ENCODE measurements at regions of chr11 and their contacts with region 1.

Region 1: DNA sequence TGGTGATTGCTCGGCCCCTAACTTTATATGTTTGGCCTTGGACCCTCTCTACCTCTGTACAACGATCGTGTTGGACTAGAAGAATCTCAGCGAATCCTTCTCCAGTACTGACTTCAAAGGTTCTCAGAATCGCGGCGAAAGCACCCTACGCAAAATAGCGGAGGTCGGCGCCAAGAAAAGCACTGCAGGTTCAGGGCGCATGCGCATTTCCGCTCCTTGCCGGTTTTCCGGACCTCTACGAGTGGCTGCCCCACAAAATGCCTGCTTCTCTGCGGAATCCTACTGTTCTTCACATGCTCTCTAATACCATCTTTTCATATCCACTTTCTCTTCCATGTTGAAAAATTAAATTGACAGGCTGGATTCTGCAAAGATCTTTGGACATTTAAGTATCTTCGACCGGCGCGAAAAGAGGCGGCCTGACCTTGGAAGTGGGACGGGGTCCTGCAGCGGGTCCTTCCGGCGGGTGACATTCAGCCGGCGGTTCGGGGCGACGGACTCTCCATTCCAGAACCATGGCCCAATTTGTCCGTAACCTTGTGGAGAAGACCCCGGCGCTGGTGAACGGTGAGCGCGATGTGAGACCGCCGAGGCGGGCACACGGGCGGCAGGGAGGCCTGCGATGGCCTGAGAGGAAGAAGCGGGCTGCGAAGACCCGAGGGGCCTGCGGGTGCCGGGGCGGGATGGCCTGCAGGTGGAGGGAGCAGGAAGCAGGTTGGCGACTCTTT is at the start of gene ATP5MG:
- DNase-seq: peak; percentile 93
- ATAC-seq: peak; percentile 78
- H3K4me3 ChIP-seq: peak within 1 kb of the TSS; percentile 89
- H3K27ac ChIP-seq: peak within 1 kb of the TSS; percentile 98
- H3K4me1 ChIP-seq: peaks cover 15% of the 10 kb centered on the region; the same call in 1 of the 2 replicates
- H3K27me3 ChIP-seq: no peaks in the 10 kb centered on the region
- CTCF ChIP-seq: no peak
- EP300 ChIP-seq: no peak
- POLR2A ChIP-seq: peak; percentile 84
- RAD21 ChIP-seq: no peak
- polyA plus RNA-seq, gene ATP5MG: 2,154 to 2,276 TPM

Region 2: GRCh38 chr11:118380571-118380970 is 20.7 kb before region 1 on chr11:
- CTCF ChIA-PET with region 1: interaction called, 10 read pairs
- POLR2A ChIA-PET with region 1: no interaction called
- RAD21 ChIA-PET with region 1: no interaction called
- SMC1A ChIA-PET with region 1: interaction called, 10 read pairs
- in situ Hi-C with region 1: no loop called
- intact Hi-C with region 1: no loop called
- DNase-seq: no peak
- ATAC-seq: no peak
- H3K4me3 ChIP-seq: no peak overlapping the region
- H3K27ac ChIP-seq: no peak overlapping the region
- H3K4me1 ChIP-seq: no peaks in the 10 kb centered on the region
- H3K27me3 ChIP-seq: no peaks in the 10 kb centered on the region
- CTCF ChIP-seq: no peak
- EP300 ChIP-seq: no peak
- POLR2A ChIP-seq: no peak
- RAD21 ChIP-seq: no peak

Region 3: DNA sequence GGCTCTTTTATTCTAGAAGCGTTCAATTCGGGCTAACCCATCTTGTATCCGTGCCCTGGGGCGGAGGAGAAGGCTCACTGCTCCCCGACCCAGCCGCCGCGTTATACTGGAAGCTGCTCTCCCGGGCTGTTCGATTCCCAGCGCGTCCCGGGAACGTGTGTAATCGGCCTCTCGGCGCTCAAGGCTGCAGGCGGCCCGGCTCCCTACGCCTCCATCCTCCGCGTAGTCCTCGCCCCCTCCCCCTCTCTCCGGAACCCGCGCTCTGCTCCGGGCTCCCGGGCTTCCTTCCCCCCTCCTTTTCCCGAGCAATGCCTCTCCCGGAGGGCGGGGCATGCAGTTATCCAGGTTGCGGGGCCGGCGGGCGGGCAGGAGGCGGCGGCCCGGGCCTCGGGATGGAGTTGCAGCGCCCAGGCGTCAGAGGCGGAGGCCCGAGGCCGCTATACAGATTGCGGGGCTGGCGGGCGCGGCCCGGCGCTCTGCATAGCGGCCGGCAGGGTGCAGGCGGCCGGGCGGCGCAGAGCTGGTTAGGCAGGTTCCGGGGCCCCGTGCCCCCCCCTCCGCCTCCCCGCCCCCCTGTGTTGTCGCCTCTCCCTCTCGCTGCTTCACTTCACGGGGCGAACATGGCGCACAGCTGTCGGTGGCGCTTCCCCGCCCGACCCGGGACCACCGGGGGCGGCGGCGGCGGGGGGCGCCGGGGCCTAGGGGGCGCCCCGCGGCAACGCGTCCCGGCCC is 34.7 kb after region 1 on chr11 and contains the start of gene KMT2A:
- CTCF ChIA-PET with region 1: interaction called, 5 read pairs
- POLR2A ChIA-PET with region 1: interaction called, 7 read pairs
- RAD21 ChIA-PET with region 1: interaction called, 13 read pairs
- SMC1A ChIA-PET with region 1: interaction called, 6 read pairs
- in situ Hi-C with region 1: no loop called
- intact Hi-C with region 1: loop called (anchors 2 kb)
- DNase-seq: no peak
- ATAC-seq: peak; percentile 54
- H3K4me3 ChIP-seq: peak within 1 kb of the TSS; percentile 94
- H3K27ac ChIP-seq: peak within 1 kb of the TSS; percentile 94
- H3K4me1 ChIP-seq: peaks cover 5% of the 10 kb centered on the region; the same call in 1 of the 2 replicates
- H3K27me3 ChIP-seq: no peaks in the 10 kb centered on the region
- CTCF ChIP-seq: no peak
- EP300 ChIP-seq: no peak
- POLR2A ChIP-seq: peak; percentile 74
- RAD21 ChIP-seq: no peak
- polyA plus RNA-seq, gene KMT2A: 6.1 to 7.4 TPM

Region 4: DNA sequence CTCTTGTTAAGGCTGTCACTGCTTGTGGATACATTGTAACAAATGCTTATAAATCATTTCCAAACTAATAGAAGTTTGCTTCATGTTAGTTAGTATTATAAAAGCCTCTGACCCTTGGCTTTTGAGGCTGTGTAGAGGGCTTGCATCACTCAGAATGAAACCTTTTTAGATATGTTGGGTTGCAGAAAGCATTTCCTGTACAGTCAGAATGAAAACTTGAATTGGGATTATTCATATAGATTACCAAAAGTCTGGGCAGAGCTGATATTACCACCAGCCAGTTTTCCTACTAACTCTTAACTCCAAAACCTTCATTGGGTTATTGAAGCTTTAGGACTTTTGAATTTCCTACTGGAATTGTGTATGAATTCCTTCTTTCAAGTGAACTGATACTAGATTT is 47.0 kb after region 1 on chr11:
- CTCF ChIA-PET with region 1: interaction called, 4 read pairs
- POLR2A ChIA-PET with region 1: interaction called, 4 read pairs
- RAD21 ChIA-PET with region 1: interaction called, 7 read pairs
- SMC1A ChIA-PET with region 1: interaction called, 10 read pairs
- in situ Hi-C with region 1: no loop called
- intact Hi-C with region 1: no loop called
- DNase-seq: peak; percentile 67
- ATAC-seq: peak; percentile 88
- H3K4me3 ChIP-seq: no peak overlapping the region
- H3K27ac ChIP-seq: peak overlapping the region; percentile 65; the same call in 1 of the 2 replicates
- H3K4me1 ChIP-seq: peaks cover 27% of the 10 kb centered on the region
- H3K27me3 ChIP-seq: no peaks in the 10 kb centered on the region
- CTCF ChIP-seq: no peak
- EP300 ChIP-seq: peak; percentile 41 to 91; a peak in 3 of 4 replicates
- POLR2A ChIP-seq: no peak
- RAD21 ChIP-seq: no peak

Measured in GM12878 (cell line).